Heart left ventricle (tissue), 16 donors: ENCODE measurements at regions of chr3 and their contacts with region 1.

Region 1: DNA sequence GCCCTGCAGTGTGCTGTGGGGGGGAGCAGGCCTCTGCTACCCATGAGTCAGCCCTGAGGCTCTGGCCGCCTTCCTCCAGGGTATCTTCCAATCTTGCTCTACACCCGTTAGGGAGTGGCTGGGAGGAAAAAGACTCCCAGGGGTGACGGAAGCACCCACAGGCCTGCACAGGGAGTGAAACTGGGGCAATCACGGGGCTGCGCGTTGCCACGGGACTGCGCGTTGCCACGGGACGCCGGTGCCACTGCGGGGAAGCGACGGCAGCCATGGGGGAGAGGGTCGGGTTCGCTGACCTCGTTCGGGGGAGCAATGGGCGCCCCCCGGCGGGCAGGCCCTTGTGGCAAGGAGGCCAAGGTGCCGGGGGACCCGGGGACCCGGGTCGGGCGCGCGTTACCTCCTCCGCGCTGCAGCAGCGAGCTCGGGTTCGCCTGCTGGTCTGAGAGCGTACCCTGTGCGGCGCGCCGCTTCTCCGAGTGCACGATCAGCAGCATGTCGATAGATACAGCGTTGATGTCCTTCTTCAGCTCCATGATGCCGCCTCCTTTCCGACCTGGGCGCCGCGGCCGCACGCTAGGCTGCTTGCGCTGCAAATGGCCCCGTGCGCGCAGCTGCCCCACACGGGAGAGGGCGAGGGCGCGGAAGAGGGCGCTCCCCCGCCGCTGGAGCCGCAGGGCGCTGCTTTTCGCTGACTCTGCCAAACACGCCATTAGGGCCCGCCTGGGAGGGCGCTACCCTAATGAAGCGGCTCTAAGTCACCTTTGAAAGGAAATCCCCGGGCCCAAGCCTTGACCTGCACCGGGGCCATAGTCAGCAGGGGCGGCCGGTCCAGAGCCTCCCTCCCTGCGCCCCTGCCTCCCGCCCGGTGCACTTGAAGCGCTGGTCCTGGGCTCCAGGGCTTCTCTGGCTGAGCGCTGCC is at the start of gene KY:
- DNase-seq: peak; percentile 61 to 82 (median 70)
- ATAC-seq: peak; percentile 85 to 93 (median 89)
- H3K4me3 ChIP-seq: peak within 1 kb of the TSS; percentile 36 to 70 (median 57)
- H3K27ac ChIP-seq: peak within 1 kb of the TSS; percentile 71 to 96 (median 87)
- H3K4me1 ChIP-seq: peaks cover 0 to 48% (median 8%) of the 10 kb centered on the region in 12 donors
- H3K27me3 ChIP-seq: peaks cover 0 to 17% (median 0%) of the 10 kb centered on the region in 9 donors
- CTCF ChIP-seq: peak in 9 of 12 donors; percentile 15 to 53 (median 27)
- POLR2A ChIP-seq: no peak
- total RNA-seq, gene KY: 5.7 to 22.5 (median 8.7) TPM

Region 2: GRCh38 chr3:134567605-134568004 is 83.1 kb before region 1 on chr3:
- intact Hi-C with region 1: no loop called
- DNase-seq: no peak
- ATAC-seq: no peak
- H3K4me3 ChIP-seq: no peak overlapping the region
- H3K27ac ChIP-seq: no peak overlapping the region
- H3K4me1 ChIP-seq: peaks cover 0 to 3% (median 0%) of the 10 kb centered on the region in 12 donors
- H3K27me3 ChIP-seq: no peaks in the 10 kb centered on the region
- CTCF ChIP-seq: no peak
- POLR2A ChIP-seq: no peak

Region 3: GRCh38 chr3:134697830-134698689 is 47.4 kb after region 1 on chr3:
- intact Hi-C with region 1: loop called in 1 of 10 experiments (anchors 5 kb)
- DNase-seq: peak in 2 of 5 donors; percentile 31 to 44
- ATAC-seq: peak; percentile 36 to 76 (median 70)
- H3K4me3 ChIP-seq: no peak overlapping the region
- H3K27ac ChIP-seq: peak overlapping the region in 10 of 12 donors; percentile 5 to 76 (median 56)
- H3K4me1 ChIP-seq: peaks cover 0 to 60% (median 17%) of the 10 kb centered on the region in 12 donors
- H3K27me3 ChIP-seq: no peaks in the 10 kb centered on the region
- CTCF ChIP-seq: peak in 1 of 12 donors; percentile 12
- POLR2A ChIP-seq: no peak

Region 4: DNA sequence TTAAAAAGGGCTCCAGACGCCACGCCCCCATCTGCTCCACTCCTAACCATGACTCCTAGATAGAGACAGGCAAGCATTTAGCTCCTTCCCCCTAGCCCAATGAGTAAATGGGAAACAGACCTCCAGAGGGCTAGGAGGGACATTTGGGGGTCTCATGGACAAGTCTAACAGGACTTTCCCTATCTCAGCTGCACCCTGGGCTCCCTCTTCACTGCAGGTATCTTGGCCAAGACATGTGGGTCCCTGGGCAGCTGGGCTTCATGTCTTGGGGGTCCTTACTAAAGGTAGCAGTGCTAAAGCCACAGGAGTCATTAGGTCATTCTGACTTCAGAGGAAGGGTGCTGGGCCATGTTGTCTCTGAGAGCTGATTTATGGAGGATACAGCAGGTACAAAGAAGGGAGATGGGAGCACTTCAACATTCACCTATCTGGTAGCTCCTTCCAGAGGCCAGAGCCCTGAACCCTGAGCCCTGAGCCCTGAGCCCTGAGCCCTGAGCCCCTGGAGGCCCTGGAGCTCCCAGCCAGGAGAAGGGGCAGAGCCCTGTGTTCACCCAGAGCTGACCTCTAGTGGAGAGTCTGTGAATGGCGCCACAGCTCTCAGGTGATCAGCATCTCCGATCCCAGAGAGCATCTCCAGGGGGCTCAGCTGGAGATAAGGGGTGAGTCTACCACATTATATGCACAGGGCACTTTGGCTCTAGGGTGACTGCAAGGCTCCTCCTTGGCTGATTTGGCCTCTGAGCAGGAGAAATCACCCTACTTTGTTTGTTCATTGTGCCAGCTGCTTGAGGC is 104.3 kb after region 1 on chr3:
- intact Hi-C with region 1: loop called in 6 of 10 experiments (anchors 2 to 10 kb)
- DNase-seq: peak in 3 of 5 donors; percentile 45 to 67 (median 57)
- ATAC-seq: peak in 2 of 4 donors; percentile 37 to 61
- H3K4me3 ChIP-seq: no peak overlapping the region
- H3K27ac ChIP-seq: no peak overlapping the region
- H3K4me1 ChIP-seq: peaks cover 0 to 18% (median 5%) of the 10 kb centered on the region in 12 donors
- H3K27me3 ChIP-seq: peaks cover 0 to 3% (median 0%) of the 10 kb centered on the region in 9 donors
- CTCF ChIP-seq: peak; percentile 26 to 58 (median 45)
- POLR2A ChIP-seq: no peak

Region 5: DNA sequence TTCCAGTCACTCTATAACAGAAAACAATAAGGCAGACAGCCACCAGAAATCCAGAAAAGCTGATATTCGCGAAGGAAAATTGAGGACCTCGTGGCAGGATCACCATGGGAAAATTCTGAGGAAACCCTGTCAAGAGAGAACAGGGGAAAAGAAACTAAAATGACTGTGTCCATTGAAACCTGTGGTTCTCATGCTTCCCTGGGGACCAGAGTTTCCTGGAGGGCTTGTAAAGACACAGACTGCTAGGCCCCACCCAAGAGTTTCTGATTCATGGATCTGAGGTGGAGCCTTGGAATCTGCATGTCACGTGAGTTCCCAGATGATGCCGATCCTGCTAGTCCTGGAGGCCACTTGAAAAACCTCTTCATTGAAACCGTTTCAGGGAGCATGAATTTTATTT is 564.8 kb after region 1 on chr3:
- intact Hi-C with region 1: no loop called
- DNase-seq: no peak
- ATAC-seq: peak in 1 of 4 donors; percentile 44
- H3K4me3 ChIP-seq: no peak overlapping the region
- H3K27ac ChIP-seq: no peak overlapping the region
- H3K4me1 ChIP-seq: peaks cover 0 to 6% (median 0%) of the 10 kb centered on the region in 12 donors
- H3K27me3 ChIP-seq: no peaks in the 10 kb centered on the region
- CTCF ChIP-seq: no peak
- POLR2A ChIP-seq: no peak